Caco-2 (cell line): ENCODE measurements at regions of chr9 and their contacts with region 1.

Region 1: GRCh38 chr9:8384091-8384490 is 584.5 kb upstream of the DMAC1 start:
- DNase-seq: no peak
- H3K4me3 ChIP-seq: no peak overlapping the region
- H3K4me3 Mint-ChIP-seq: peak overlapping the region; percentile 18
- H3K27ac Mint-ChIP-seq: peak overlapping the region; percentile 90
- H3K4me1 ChIP-seq: peaks cover 60% of the 10 kb centered on the region
- H3K4me1 Mint-ChIP-seq: peaks cover 22% of the 10 kb centered on the region
- H3K27me3 ChIP-seq: no peaks in the 10 kb centered on the region
- H3K27me3 Mint-ChIP-seq: no peaks in the 10 kb centered on the region
- CTCF ChIP-seq: no peak

Region 2: DNA sequence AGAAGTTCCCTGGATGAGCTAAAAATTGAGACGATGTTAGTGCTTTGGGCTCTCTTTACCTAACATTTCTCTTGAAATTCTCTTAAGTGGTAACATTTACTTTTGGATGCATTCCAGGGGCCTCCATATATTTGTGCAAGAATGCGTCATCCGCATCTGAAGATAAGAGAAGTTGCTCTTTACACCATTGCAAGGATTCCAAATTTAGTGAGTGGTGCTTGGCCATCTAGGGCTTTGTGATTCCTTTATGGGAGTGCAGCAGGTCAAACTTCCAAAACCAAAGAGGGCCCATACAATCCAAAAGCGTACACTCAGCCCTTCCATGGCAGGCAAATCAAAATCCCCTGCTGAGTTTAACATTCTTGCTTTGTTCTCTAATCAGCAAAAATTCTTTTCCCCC is 482.5 kb before region 1 on chr9:
- CTCF ChIA-PET with region 1: no interaction called
- POLR2A ChIA-PET with region 1: no interaction called
- intact Hi-C with region 1: loop called (anchors 1 kb)
- DNase-seq: peak; percentile 76 to 81
- H3K4me3 ChIP-seq: no peak overlapping the region
- H3K4me3 Mint-ChIP-seq: no peak overlapping the region
- H3K27ac Mint-ChIP-seq: peak overlapping the region; percentile 59
- H3K4me1 ChIP-seq: peaks cover 37% of the 10 kb centered on the region
- H3K4me1 Mint-ChIP-seq: peaks cover 7% of the 10 kb centered on the region
- H3K27me3 ChIP-seq: no peaks in the 10 kb centered on the region
- H3K27me3 Mint-ChIP-seq: no peaks in the 10 kb centered on the region
- CTCF ChIP-seq: no peak

Region 3: DNA sequence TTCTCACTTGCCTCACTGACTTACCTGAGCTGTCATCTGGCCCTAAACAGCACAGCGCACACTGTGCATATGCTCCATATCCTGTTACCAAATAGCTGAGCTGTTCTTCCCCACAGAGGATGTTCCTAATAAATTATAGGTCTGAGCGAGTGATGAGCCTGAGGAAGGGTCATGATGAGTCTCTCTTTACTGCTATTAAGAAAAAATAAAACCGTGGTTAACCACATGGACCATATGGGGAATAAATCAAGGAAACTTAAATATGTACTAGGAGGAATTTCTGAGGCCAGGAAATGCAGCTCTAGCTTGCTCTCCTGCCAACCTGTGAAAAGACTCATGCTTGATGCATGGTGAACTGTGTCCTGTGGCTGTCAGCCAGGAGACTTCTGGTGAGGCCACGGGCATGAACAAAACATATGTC is 159.7 kb before region 1 on chr9:
- CTCF ChIA-PET with region 1: no interaction called
- POLR2A ChIA-PET with region 1: no interaction called
- intact Hi-C with region 1: loop called (anchors 5 kb)
- DNase-seq: no peak
- H3K4me3 ChIP-seq: no peak overlapping the region
- H3K4me3 Mint-ChIP-seq: no peak overlapping the region
- H3K27ac Mint-ChIP-seq: no peak overlapping the region
- H3K4me1 ChIP-seq: peaks cover 21% of the 10 kb centered on the region
- H3K4me1 Mint-ChIP-seq: peaks cover 23% of the 10 kb centered on the region
- H3K27me3 ChIP-seq: no peaks in the 10 kb centered on the region
- H3K27me3 Mint-ChIP-seq: no peaks in the 10 kb centered on the region
- CTCF ChIP-seq: no peak

Region 4: GRCh38 chr9:8329561-8330283 is 54.4 kb before region 1 on chr9:
- CTCF ChIA-PET with region 1: no interaction called
- POLR2A ChIA-PET with region 1: no interaction called
- intact Hi-C with region 1: no loop called
- DNase-seq: no peak
- H3K4me3 ChIP-seq: no peak overlapping the region
- H3K4me3 Mint-ChIP-seq: no peak overlapping the region
- H3K27ac Mint-ChIP-seq: no peak overlapping the region
- H3K4me1 ChIP-seq: no peaks in the 10 kb centered on the region
- H3K4me1 Mint-ChIP-seq: no peaks in the 10 kb centered on the region
- H3K27me3 ChIP-seq: no peaks in the 10 kb centered on the region
- H3K27me3 Mint-ChIP-seq: no peaks in the 10 kb centered on the region
- CTCF ChIP-seq: no peak

Region 5: GRCh38 chr9:8361364-8361763 is 22.7 kb before region 1 on chr9:
- CTCF ChIA-PET with region 1: no interaction called
- POLR2A ChIA-PET with region 1: no interaction called
- intact Hi-C with region 1: loop called (anchors 1 kb)
- DNase-seq: peak in 1 of 2 experiments; percentile 17
- H3K4me3 ChIP-seq: no peak overlapping the region
- H3K4me3 Mint-ChIP-seq: no peak overlapping the region
- H3K27ac Mint-ChIP-seq: peak overlapping the region; percentile 72
- H3K4me1 ChIP-seq: peaks cover 27% of the 10 kb centered on the region
- H3K4me1 Mint-ChIP-seq: peaks cover 5% of the 10 kb centered on the region
- H3K27me3 ChIP-seq: no peaks in the 10 kb centered on the region
- H3K27me3 Mint-ChIP-seq: no peaks in the 10 kb centered on the region
- CTCF ChIP-seq: no peak

Region 6: DNA sequence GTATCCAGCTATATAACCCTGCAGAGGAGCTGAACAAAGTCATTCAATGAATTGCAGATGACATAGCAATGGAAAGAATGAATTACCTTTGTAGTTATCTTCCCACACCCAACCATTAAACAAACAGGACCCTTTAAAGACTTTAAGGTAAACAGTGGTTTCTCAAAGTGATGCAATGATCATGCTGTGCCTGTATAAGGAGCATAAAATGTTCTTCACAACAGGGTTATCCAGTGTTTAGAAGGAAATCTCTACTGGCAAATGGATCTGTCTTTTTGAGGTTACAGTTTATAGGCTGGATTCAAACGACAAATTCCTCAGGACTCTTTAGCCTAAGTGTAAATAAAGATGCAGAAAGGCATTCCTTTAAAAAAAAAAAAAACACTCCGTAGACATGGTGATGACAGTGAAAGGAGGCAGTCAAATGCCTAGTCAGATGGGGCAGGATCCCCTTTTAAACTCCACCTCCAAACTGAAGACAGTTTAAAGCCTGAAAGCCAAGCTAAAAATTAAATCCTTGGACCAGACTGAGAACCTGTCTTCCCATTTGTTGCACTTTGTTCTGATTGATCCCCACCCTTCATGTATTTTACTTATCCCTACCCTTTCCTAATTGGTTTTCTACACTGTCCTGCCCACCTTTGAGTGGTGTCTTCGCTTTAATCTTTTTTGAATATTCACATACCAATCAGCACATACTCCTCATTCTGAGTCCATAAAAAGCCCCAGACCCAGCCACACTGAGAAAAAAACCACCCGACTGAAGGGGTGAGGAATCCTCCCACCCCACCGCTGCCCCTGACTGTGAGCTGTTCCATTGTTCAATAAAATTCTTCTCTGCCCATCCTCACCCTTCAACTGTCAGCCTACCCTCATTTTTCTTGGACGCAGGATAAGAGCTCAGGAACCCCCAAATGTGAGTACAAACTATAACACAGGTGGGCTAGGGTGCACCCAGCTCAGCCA is 176.8 kb after region 1 on chr9:
- CTCF ChIA-PET with region 1: no interaction called
- POLR2A ChIA-PET with region 1: no interaction called
- intact Hi-C with region 1: loop called (anchors 2 kb)
- DNase-seq: peak in 1 of 2 experiments; percentile 40
- H3K4me3 ChIP-seq: no peak overlapping the region
- H3K4me3 Mint-ChIP-seq: peak overlapping the region; percentile 37
- H3K27ac Mint-ChIP-seq: peak overlapping the region; percentile 97
- H3K4me1 ChIP-seq: peaks cover 25% of the 10 kb centered on the region
- H3K4me1 Mint-ChIP-seq: peaks cover 15% of the 10 kb centered on the region
- H3K27me3 ChIP-seq: no peaks in the 10 kb centered on the region
- H3K27me3 Mint-ChIP-seq: no peaks in the 10 kb centered on the region
- CTCF ChIP-seq: no peak